Endothelial cell of umbilical vein (primary cell): ENCODE measurements at regions of chr10 and their contacts with region 1.

Region 1: DNA sequence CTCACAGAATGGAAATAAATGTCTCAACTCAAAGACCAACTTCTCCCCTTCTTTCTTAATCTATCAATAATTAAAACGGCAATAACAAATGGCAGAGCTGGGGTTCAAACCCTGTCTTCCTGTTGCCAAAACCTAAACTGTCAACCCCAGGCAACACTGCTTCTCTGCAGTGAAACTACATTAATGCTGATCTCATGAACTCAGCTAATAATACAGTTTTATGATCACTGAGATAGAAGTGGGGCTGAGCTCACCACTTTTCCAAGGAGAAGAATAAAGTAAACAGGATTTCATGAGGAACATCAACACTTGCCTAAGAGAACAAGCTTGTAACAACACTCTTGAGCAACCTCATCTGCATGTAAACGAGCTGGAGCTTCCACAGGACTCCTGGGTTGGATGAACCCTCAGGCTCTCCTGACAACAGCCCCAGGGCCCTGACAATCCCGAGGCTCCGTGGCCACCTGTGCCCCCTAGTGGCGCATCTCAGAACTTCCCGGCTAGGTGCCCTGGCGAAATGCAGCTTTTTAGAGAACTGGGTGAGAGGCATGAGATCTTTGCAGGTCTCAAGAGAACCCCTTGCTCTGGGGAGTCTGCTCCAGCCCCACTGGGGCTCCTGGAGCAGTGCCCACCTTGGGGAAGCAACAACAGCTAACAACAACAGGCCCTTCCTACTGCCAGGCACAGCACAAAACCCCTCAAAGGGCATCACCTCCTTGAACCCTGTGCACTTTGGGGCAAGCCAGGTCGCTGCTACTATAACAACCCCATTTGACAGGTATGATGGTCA is 169.3 kb downstream of the SH3PXD2A start:
- DNase-seq: peak; percentile 60
- H3K4me3 ChIP-seq: no peak overlapping the region
- H3K27ac ChIP-seq: no peak overlapping the region
- H3K4me1 ChIP-seq: no peaks in the 10 kb centered on the region
- H3K27me3 ChIP-seq: no peaks in the 10 kb centered on the region
- CTCF ChIP-seq: peak; percentile 92 to 96
- POLR2A ChIP-seq: no peak

Region 2: DNA sequence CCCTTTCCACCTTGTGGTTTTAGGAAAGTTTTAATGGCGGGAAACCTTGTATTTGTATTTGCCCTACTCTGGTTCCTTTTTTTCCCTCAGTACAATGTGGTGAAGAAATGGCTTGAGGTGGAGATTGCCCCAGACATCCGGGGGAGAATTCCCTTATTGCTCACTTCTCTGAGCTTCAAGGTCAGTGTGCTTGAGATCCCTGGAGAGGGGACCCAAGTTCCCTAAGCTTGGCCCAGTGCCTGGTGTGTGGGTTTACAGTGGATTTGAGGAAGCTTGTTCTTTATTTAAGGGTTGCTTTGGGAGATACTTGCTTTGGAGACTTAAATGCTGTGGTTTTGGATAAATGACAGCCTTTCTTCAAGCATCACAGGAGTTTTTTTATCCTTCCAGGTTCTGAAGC is 252.2 kb before region 1 on chr10:
- CTCF ChIA-PET with region 1: no interaction called
- POLR2A ChIA-PET with region 1: no interaction called
- dilution Hi-C with region 1: no loop called
- intact Hi-C with region 1: loop called (anchors 10 kb)
- DNase-seq: no peak
- H3K4me3 ChIP-seq: no peak overlapping the region
- H3K27ac ChIP-seq: no peak overlapping the region
- H3K4me1 ChIP-seq: peaks cover 5% of the 10 kb centered on the region
- H3K27me3 ChIP-seq: no peaks in the 10 kb centered on the region
- CTCF ChIP-seq: no peak
- POLR2A ChIP-seq: no peak

Region 3: DNA sequence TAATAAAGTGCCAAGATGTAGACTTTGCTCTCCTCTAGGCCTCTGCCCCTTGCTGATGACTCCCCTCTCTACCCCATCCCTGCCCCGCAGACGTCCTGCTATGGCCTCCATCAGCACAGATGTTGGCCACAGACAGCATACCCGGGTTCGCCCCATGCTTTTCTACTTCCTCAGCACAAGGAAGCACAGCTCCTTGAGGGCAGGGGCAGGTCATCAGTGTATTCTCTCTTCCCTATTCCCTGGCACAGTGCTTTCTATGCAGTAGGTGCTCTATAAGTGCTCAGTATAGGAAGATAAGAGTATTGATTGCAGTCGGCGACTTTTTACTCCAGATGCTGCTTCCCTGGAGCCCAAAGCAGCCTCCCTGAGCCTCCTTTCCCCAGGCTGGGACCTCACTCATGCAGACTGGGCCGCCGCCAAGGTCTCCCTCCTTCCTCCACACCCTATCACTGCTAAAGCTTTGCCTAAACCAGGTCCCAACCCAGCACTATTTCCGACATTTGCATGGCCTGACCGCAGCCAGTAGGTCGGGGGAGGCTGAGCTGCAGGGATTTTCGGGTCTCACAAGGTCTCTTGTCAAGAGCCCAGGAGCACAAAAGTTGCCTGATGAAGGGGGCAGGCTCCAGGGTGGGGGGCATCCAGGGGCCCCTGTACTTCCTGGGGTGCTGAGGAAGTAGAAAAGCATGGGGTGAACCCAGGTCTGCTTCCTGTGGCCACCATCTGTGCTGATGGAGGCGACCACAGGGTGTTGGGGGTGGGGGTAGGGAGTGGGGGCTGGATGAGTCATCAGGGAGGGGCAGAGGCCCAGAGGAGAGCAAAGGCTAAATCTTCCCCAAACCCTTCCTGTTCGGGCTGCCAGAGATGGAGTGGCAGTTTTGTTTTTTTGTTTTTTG is 215.1 kb before region 1 on chr10:
- CTCF ChIA-PET with region 1: no interaction called
- POLR2A ChIA-PET with region 1: no interaction called
- dilution Hi-C with region 1: no loop called
- intact Hi-C with region 1: no loop called
- DNase-seq: no peak
- H3K4me3 ChIP-seq: no peak overlapping the region
- H3K27ac ChIP-seq: no peak overlapping the region
- H3K4me1 ChIP-seq: no peaks in the 10 kb centered on the region
- H3K27me3 ChIP-seq: peaks cover 1 to 6% of the 10 kb centered on the region in 2 experiments
- CTCF ChIP-seq: no peak
- POLR2A ChIP-seq: no peak

Region 4: DNA sequence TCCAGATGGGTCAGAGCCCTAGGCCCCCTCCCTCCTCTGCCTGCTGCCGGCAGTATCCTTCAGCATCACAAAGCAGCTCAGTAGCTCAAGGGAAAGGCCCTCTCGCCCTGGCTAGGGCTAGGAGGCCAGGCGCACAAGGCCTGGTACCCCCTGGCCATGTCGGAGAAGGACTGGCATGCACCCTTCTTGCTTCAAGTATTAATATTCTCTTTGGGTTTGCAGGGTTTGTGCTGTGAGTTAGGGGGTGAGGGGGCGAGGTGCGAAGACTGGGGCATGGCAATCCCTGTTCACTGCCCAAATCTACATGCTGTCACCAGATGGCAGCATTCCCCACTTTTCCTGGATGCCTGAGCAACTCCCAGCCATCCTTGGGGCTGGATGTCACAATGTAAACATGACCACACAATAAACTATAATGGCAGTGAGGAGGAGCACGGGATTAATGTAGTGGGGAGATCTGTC is 87.4 kb before region 1 on chr10:
- CTCF ChIA-PET with region 1: interaction called, 99 read pairs
- POLR2A ChIA-PET with region 1: no interaction called
- dilution Hi-C with region 1: no loop called
- intact Hi-C with region 1: loop called (anchors 1 kb)
- DNase-seq: peak; percentile 70
- H3K4me3 ChIP-seq: no peak overlapping the region
- H3K27ac ChIP-seq: no peak overlapping the region
- H3K4me1 ChIP-seq: peaks cover 17% of the 10 kb centered on the region
- H3K27me3 ChIP-seq: no peaks in the 10 kb centered on the region
- CTCF ChIP-seq: peak; percentile 78
- POLR2A ChIP-seq: no peak

Region 5: DNA sequence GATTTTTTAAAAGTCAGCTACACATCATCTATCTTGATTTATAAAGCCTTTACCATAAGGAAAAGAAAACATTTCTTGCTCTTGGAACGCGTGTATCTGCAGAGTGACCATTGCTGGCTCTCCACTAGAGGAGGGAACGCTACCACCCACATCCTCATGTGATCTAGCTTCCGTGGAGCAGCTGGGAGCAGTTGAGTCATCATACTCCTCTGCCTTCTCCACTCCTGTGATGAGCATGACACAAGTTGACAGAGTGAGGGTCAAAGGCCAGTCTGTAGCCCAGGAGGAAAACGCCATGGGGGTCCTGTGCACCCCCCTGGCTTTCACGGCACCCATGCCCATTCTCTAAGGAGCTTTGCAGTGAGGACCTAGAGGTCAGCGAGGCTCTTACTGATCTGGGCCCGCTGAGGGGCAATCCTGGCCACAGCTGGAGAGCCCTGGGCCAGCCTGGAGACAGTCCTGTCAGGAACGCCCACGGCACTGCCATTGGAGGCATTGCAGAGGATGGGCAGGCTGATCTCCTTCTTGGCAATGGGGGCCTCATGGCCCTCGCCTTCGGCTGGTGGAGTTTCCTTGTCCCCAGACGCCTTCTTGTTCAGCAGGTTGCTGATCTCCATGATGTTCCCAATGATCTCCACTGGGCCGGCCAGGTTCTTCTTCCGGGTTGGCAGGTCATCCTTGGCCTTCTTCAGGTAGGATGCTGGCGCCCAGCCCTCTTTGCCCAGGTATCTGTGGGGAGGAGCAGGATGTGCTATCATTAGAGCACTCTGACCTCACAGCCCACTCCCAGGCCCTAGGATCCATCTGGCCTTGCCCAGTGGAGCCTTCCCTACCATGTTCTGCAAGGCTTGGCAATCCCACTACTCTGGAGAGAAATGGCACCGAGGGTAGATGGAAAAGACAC is 73.4 kb before region 1 on chr10:
- CTCF ChIA-PET with region 1: interaction called, 28 read pairs
- POLR2A ChIA-PET with region 1: no interaction called
- dilution Hi-C with region 1: no loop called
- intact Hi-C with region 1: no loop called
- DNase-seq: no peak
- H3K4me3 ChIP-seq: no peak overlapping the region
- H3K27ac ChIP-seq: no peak overlapping the region
- H3K4me1 ChIP-seq: no peaks in the 10 kb centered on the region
- H3K27me3 ChIP-seq: no peaks in the 10 kb centered on the region
- CTCF ChIP-seq: no peak
- POLR2A ChIP-seq: no peak

Region 6: GRCh38 chr10:103696411-103697145 is 10.5 kb after region 1 on chr10:
- CTCF ChIA-PET with region 1: interaction called, 35 read pairs
- POLR2A ChIA-PET with region 1: no interaction called
- dilution Hi-C with region 1: no loop called
- intact Hi-C with region 1: no loop called
- DNase-seq: peak; percentile 83
- H3K4me3 ChIP-seq: no peak overlapping the region
- H3K27ac ChIP-seq: peak overlapping the region; percentile 61
- H3K4me1 ChIP-seq: peaks cover 20% of the 10 kb centered on the region
- H3K27me3 ChIP-seq: no peaks in the 10 kb centered on the region
- CTCF ChIP-seq: peak; percentile 56 to 63
- POLR2A ChIP-seq: no peak